A549 (cell line): ENCODE measurements at regions of chr1 and their contacts with region 1.

Region 1: GRCh38 chr1:46571691-46572225 is 20.3 kb upstream of the KNCN start:
- DNase-seq: no peak
- ATAC-seq: no peak
- H3K4me3 ChIP-seq: no peak overlapping the region
- H3K27ac ChIP-seq: no peak overlapping the region
- H3K4me1 ChIP-seq: no peaks in the 10 kb centered on the region
- CTCF ChIP-seq: no peak
- EP300 ChIP-seq: no peak
- POLR2A ChIP-seq: no peak
- RAD21 ChIP-seq: no peak

Region 2: GRCh38 chr1:46547481-46548383 is 24.0 kb before region 1 on chr1:
- CTCF ChIA-PET with region 1: interaction called, 11 read pairs
- POLR2A ChIA-PET with region 1: no interaction called
- DNase-seq: peak; percentile 34 to 56
- ATAC-seq: peak; percentile 61 to 86; a peak in 5 of 6 replicates
- H3K4me3 ChIP-seq: no peak overlapping the region
- H3K27ac ChIP-seq: no peak overlapping the region
- H3K4me1 ChIP-seq: no peaks in the 10 kb centered on the region
- CTCF ChIP-seq: peak; percentile 54
- EP300 ChIP-seq: no peak
- POLR2A ChIP-seq: no peak
- RAD21 ChIP-seq: peak; percentile 45 to 49